ENCODE measurements at regions of chrX and their contacts with region 1.

Region 1: GRCh38 chrX:15674841-15675489 is 10.4 kb upstream of the CLTRN start:
- DNase-seq: peak; percentile 91 to 98 (median 93)
- H3K4me3 ChIP-seq: peak overlapping the region; percentile 50 to 91 (median 87)
- H3K4me3 Mint-ChIP-seq: no peak overlapping the region
- H3K27ac ChIP-seq: peak overlapping the region; percentile 98
- H3K27ac Mint-ChIP-seq: no peak overlapping the region
- H3K4me1 ChIP-seq: peaks cover 47 to 59% of the 10 kb centered on the region in 2 donors
- H3K4me1 Mint-ChIP-seq: peaks cover 29% of the 10 kb centered on the region
- H3K27me3 ChIP-seq: peaks cover 0 to 17% of the 10 kb centered on the region in 2 donors
- H3K27me3 Mint-ChIP-seq: peaks cover 0 to 18% (median 5%) of the 10 kb centered on the region in 3 donors
- CTCF ChIP-seq: no peak

Region 2: DNA sequence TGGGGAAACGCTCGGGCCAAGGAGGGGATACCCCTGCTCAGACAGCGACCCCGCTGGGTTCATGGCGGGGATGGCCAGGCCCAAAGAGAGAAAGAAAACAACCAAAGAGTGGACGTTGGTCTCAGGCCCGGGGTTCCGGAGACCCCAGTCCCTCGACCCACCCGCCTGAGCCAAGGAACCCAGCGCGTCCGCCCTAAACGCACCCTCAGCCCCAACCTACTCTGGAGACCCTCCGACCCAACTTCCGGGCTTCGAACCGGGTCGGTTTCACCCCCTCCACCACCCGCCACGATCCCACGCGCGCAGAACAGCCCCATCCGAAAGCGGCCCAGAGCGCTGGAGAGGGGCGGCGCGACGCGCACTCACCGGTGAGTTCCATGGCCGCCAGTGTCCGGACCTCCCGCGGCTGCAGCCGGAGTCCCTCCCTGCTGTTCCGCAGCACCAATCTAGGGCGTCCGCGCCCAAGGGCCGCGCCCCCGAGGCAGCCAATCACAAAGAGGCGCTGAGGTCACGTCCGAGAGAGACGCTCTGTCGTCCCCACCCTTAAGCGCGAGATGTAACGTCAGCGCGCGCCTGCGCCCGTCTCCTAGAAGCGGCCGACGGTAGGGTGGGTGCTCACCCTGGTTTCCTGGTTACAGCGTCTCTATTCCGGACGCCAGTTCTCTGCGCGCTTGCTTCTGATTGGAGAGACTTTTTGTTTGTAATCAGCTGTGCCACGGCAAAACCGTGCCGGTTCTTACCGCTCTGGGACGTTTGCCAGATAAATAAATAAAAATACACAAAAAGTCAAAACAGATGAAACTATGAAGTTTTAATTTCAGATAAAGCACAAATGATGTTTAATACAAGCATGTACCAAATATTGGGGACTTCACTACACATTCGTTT is 339.6 kb before region 1 on chrX and contains the start of gene PIGA:
- intact Hi-C with region 1: loop called (anchors 10 kb)
- DNase-seq: peak; percentile 93 to 97 (median 96)
- H3K4me3 ChIP-seq: peak within 1 kb of the TSS; percentile 70 to 90 (median 82)
- H3K4me3 Mint-ChIP-seq: peak within 1 kb of the TSS; percentile 90 to 92
- H3K27ac ChIP-seq: peak within 1 kb of the TSS; percentile 87 to 89
- H3K27ac Mint-ChIP-seq: peak within 1 kb of the TSS; percentile 94 to 99 (median 96)
- H3K4me1 ChIP-seq: peaks cover 4 to 12% of the 10 kb centered on the region in 2 donors
- H3K4me1 Mint-ChIP-seq: peaks cover 9% of the 10 kb centered on the region
- H3K27me3 ChIP-seq: peaks cover 0 to 29% of the 10 kb centered on the region in 2 donors
- H3K27me3 Mint-ChIP-seq: peaks cover 3 to 20% (median 4%) of the 10 kb centered on the region in 3 donors
- CTCF ChIP-seq: no peak
- polyA plus RNA-seq, gene PIGA: 6.3 to 36.1 (median 6.4) TPM

Region 3: GRCh38 chrX:15737960-15738902 is 63.3 kb after region 1 on chrX and contains the start of gene CA5B:
- intact Hi-C with region 1: loop called in 1 of 2 experiments (anchors 5 kb)
- DNase-seq: peak; percentile 89 to 95 (median 91)
- H3K4me3 ChIP-seq: peak within 1 kb of the TSS; percentile 48 to 88 (median 71)
- H3K4me3 Mint-ChIP-seq: peak within 1 kb of the TSS; percentile 84 to 86
- H3K27ac ChIP-seq: peak within 1 kb of the TSS; percentile 35 to 69
- H3K27ac Mint-ChIP-seq: peak within 1 kb of the TSS; percentile 86 to 93 (median 89)
- H3K4me1 ChIP-seq: peaks cover 6 to 27% of the 10 kb centered on the region in 2 donors
- H3K4me1 Mint-ChIP-seq: peaks cover 18% of the 10 kb centered on the region
- H3K27me3 ChIP-seq: peaks cover 0 to 11% of the 10 kb centered on the region in 2 donors
- H3K27me3 Mint-ChIP-seq: peaks cover 0 to 28% (median 0%) of the 10 kb centered on the region in 3 donors
- CTCF ChIP-seq: no peak
- polyA plus RNA-seq, gene CA5B: 6.2 to 24.4 (median 21.4) TPM

Region 4: DNA sequence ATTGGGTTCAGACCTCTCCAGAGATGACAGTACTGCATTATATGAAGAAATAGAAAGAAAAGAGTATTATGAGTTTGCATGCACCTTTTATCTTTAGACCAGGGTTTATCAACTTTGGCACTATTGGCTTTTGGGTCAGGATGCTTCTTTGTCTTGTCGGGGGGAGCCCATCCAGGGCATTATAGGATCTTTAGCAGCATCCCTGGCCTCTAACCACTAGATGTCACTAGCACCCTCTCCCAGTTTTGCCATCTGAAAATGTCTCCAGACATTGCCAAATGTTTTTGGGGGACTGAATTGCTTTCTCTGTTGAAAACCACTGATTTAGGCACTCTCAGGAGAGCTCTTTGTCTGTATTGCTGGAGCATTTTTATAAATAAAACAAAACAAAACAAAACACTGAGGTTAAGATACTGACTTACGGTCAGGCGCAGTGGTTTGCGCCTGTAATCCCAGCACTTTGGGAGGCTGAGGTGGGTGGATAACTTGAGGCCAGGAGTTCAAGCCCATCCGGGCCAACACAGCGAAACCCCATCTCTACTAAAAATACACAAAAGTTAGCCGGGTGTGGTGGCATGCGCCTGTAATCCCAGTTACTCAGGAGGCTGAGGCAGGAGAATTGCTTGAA is 86.7 kb after region 1 on chrX:
- intact Hi-C with region 1: no loop called
- DNase-seq: peak in 2 of 3 donors; percentile 32 to 55
- H3K4me3 ChIP-seq: no peak overlapping the region
- H3K4me3 Mint-ChIP-seq: no peak overlapping the region
- H3K27ac ChIP-seq: no peak overlapping the region
- H3K27ac Mint-ChIP-seq: peak overlapping the region in 3 of 7 donors; percentile 11 to 37 (median 18)
- H3K4me1 ChIP-seq: peaks cover 2 to 7% of the 10 kb centered on the region in 2 donors
- H3K4me1 Mint-ChIP-seq: peaks cover 5% of the 10 kb centered on the region
- H3K27me3 ChIP-seq: peaks cover 0 to 2% of the 10 kb centered on the region in 2 donors
- H3K27me3 Mint-ChIP-seq: peaks cover 0 to 8% (median 0%) of the 10 kb centered on the region in 3 donors
- CTCF ChIP-seq: peak; percentile 58

Region 5: GRCh38 chrX:15789979-15790768 is 115.2 kb after region 1 on chrX and contains the start of gene ZRSR2:
- intact Hi-C with region 1: no loop called
- DNase-seq: peak; percentile 68 to 71 (median 69)
- H3K4me3 ChIP-seq: peak within 1 kb of the TSS; percentile 83 to 96 (median 87)
- H3K4me3 Mint-ChIP-seq: no peak within 1 kb of the TSS
- H3K27ac ChIP-seq: peak within 1 kb of the TSS; percentile 84 to 98
- H3K27ac Mint-ChIP-seq: no peak within 1 kb of the TSS
- H3K4me1 ChIP-seq: peaks cover 36 to 51% of the 10 kb centered on the region in 2 donors
- H3K4me1 Mint-ChIP-seq: peaks cover 26% of the 10 kb centered on the region
- H3K27me3 ChIP-seq: no peaks in the 10 kb centered on the region
- H3K27me3 Mint-ChIP-seq: peaks cover 0 to 2% (median 0%) of the 10 kb centered on the region in 3 donors
- CTCF ChIP-seq: no peak
- polyA plus RNA-seq, gene ZRSR2: 9.3 to 32.1 (median 11.2) TPM

Region 6: DNA sequence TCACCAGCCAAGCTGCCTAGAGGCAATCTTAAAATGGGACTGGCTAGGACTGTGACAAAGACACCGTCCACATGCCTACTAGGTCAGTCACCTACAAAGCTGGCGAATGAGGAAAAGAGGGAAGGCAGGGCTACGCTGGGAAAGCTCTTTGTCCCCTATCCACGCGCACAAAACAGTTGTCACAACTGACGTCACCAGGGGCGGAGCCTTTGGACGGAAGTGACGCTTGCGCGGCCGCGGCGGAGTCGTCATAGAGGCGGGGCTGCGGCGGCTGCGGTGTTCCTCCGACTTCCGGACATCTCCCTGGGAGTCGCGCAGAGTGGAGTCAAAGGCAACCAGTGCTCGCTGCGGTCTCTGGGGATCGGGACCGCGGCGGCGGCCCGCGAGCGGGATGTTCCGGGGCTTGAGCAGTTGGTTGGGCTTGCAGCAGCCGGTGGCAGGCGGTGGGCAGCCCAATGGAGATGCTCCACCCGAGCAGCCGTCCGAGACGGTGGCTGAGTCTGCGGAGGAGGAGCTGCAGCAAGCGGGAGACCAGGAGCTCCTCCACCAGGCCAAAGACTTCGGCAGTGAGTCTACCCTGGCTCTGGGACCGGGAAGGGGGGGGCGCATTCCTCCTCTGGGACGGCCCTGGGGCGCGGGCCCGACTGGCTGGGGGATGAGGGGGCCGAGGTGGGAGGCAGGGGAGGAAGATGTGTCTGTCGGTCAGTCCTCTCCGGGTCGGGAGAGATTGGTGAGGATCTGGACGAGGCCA is 1044.5 kb after region 1 on chrX and contains the start of gene SYAP1:
- intact Hi-C with region 1: loop called in 1 of 2 experiments (anchors 10 kb)
- DNase-seq: peak; percentile 86 to 94 (median 93)
- H3K4me3 ChIP-seq: peak within 1 kb of the TSS; percentile 58 to 92 (median 88)
- H3K4me3 Mint-ChIP-seq: peak within 1 kb of the TSS; percentile 87 to 91
- H3K27ac ChIP-seq: peak within 1 kb of the TSS; percentile 90 to 93
- H3K27ac Mint-ChIP-seq: peak within 1 kb of the TSS; percentile 93 to 98 (median 97)
- H3K4me1 ChIP-seq: peaks cover 9 to 28% of the 10 kb centered on the region in 2 donors
- H3K4me1 Mint-ChIP-seq: peaks cover 20% of the 10 kb centered on the region
- H3K27me3 ChIP-seq: peaks cover 0 to 1% of the 10 kb centered on the region in 2 donors
- H3K27me3 Mint-ChIP-seq: peaks cover 0 to 49% (median under 1%) of the 10 kb centered on the region in 3 donors
- CTCF ChIP-seq: no peak
- polyA plus RNA-seq, gene SYAP1: 4.2 to 9.0 (median 7.1) TPM